KBM-7 (cell line): ENCODE measurements at regions of chr21 and their contacts with region 1.

Region 1: DNA sequence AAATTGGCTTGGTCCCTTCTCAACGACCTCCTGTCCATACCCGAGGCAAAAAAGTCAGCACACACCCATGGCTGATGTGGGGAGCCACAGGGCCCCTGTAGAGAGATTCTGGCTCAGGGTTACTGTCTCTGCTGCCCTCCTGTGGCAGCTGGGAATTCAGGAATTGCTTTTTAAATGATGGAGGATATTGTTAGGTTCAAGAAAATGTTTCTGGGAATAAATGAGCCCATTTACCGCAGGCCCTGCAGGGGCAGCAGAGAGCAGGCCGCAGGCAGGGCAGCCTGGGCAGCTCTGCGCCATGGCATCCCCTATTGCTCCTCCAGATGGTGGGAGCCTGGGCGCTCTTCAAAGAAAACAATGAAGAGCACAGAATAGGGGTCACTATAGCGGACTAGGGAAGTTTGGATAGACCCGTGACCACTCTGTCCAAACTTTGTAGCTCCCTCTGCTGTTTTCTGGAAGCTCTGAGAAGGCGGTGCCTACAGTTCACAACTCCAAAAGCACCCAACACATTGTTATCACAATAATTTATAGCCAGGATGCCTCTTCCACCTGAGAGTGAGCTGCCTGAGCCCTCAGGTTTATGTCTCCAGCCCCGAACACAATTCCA is 201.1 kb downstream of the BACH1 start:
- DNase-seq: peak; percentile 76

Region 2: GRCh38 chr21:29613021-29613420 is 113.2 kb after region 1 on chr21:
- in situ Hi-C with region 1: loop called (anchors 25 kb)
- DNase-seq: no peak

Region 3: DNA sequence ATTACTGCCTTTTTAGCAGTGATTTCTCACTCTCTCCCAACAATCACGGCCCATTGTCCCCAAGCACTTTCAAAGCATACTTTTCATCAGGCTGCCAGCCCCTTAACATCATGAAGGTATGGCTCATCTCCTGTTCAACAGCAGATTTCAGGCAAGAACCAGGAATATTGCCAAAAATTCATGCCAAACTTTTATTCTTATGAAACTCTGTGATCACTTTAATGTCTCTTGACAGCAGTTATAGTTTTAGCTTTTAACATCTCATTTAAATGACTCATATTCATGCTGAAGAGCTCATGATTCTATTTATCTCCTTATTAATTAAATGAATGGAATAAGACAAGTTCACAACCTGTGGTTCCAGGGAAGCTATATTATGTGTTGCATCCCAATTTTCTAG is 204.9 kb after region 1 on chr21:
- in situ Hi-C with region 1: no loop called
- DNase-seq: no peak

Region 4: GRCh38 chr21:29849735-29850176 is 349.9 kb after region 1 on chr21:
- in situ Hi-C with region 1: loop called (anchors 25 kb)
- DNase-seq: peak; percentile 79